ENCODE measurements at regions of chr10 and their contacts with region 1.

Region 1: GRCh38 chr10:125866421-125867029 is 14.6 kb downstream of the DHX32 start:
- DNase-seq: no peak
- ATAC-seq: no peak
- H3K4me3 Mint-ChIP-seq: no peak overlapping the region
- H3K27ac Mint-ChIP-seq: no peak overlapping the region
- H3K4me1 Mint-ChIP-seq: no peaks in the 10 kb centered on the region
- H3K27me3 Mint-ChIP-seq: no peaks in the 10 kb centered on the region

Region 2: GRCh38 chr10:126749015-126749655 is 882.6 kb after region 1 on chr10:
- CTCF ChIA-PET with region 1: interaction called, 3 read pairs
- POLR2A ChIA-PET with region 1: no interaction called
- intact Hi-C with region 1: loop called in 1 of 2 experiments (anchors 2 kb)
- DNase-seq: peak; percentile 79
- ATAC-seq: peak; percentile 80
- H3K4me3 Mint-ChIP-seq: no peak overlapping the region
- H3K27ac Mint-ChIP-seq: no peak overlapping the region
- H3K4me1 Mint-ChIP-seq: no peaks in the 10 kb centered on the region
- H3K27me3 Mint-ChIP-seq: no peaks in the 10 kb centered on the region